ENCODE measurements at regions of chr17 and their contacts with region 1.

Region 1: GRCh38 chr17:68457539-68458259 is 403 bp upstream of the WIPI1 start:
- DNase-seq: peak; percentile 98 to 100 (median 99)
- H3K4me3 ChIP-seq: peak overlapping the region; percentile 59 to 96 (median 85)
- H3K27ac ChIP-seq: peak overlapping the region in 54 of 59 donors; percentile 18 to 97 (median 79)
- H3K27me3 ChIP-seq: no peaks in the 10 kb centered on the region
- CTCF ChIP-seq: peak in 22 of 56 donors; percentile 5 to 49 (median 22)

Region 2: GRCh38 chr17:68172461-68172954 is 285.2 kb before region 1 on chr17:
- intact Hi-C with region 1: loop called in 1 of 2 experiments (anchors 2 kb)
- DNase-seq: peak in 9 of 10 donors; percentile 53 to 77 (median 70)
- H3K4me3 ChIP-seq: no peak overlapping the region
- H3K27ac ChIP-seq: no peak overlapping the region
- H3K27me3 ChIP-seq: no peaks in the 10 kb centered on the region
- CTCF ChIP-seq: peak; percentile 79 to 99 (median 94)

Region 3: DNA sequence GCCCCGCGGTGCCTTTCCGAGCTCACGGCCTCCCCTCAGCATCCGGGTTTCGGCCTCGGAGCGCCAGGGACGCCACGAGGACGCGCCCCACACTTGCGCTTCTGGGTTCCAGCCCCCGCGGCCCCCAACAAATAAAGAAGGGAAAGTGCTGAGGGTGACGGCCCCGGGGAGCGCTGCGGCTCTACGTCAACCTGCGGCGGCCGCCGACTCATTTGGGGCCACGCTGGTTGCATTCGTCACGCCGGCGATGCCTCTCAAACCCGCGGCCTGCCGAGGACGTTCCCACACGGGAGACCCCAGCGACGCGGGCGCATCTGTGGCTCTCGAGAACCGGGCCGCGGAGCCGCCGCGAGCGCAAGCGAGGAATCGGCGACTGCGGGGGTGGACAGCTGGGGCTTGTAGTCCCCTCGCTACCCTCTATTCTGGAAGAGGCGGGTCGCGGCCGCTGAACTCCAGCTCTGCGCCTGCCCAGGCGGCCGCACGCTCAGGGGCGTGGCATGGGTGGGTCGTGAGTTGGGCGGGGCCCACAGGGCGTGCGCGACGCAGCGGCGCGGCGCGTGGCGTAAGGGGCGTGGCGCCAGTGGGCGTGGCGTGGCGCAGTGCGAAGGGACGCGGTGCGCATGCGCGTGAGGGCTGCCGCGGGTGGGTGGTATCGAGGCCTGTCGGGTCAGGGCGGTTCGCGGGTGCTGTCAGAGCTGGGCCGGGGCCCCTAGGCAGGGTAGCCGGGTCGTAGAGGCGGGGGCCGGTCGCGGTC is 210.1 kb before region 1 on chr17 and contains the start of gene AMZ2:
- intact Hi-C with region 1: loop called (anchors 1 to 5 kb)
- DNase-seq: peak; percentile 87 to 98 (median 94)
- H3K4me3 ChIP-seq: peak within 1 kb of the TSS; percentile 60 to 97 (median 88)
- H3K27ac ChIP-seq: peak within 1 kb of the TSS; percentile 85 to 100 (median 97)
- H3K27me3 ChIP-seq: no peaks in the 10 kb centered on the region
- CTCF ChIP-seq: peak in 33 of 56 donors; percentile 12 to 66 (median 29)
- total RNA-seq, gene AMZ2: 77.7 to 163 (median 118) TPM

Region 4: DNA sequence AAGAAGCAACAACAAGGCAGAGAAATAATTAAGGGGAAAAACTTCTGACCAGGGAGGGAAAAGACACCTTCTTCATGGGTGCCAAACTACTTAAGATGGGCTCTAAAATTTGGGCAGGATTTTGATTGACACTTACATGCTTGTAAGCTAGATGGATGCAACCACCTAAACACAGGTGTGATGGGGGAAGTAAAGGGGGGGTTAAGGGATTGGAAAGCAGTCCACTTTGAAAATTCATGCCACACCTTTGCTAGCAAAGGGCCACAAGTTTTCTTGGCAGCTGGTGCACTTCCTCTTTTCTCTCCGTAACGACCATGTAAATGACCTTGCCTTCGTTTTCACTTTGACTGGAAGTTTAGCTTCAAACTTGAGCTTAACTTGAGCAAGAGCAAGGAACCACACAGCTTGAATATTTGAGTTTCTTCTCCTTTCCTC is 40.2 kb after region 1 on chr17:
- intact Hi-C with region 1: no loop called
- DNase-seq: no peak
- H3K4me3 ChIP-seq: no peak overlapping the region
- H3K27ac ChIP-seq: peak overlapping the region in 10 of 59 donors; percentile 12 to 56 (median 26)
- H3K27me3 ChIP-seq: no peaks in the 10 kb centered on the region
- CTCF ChIP-seq: no peak

Region 5: DNA sequence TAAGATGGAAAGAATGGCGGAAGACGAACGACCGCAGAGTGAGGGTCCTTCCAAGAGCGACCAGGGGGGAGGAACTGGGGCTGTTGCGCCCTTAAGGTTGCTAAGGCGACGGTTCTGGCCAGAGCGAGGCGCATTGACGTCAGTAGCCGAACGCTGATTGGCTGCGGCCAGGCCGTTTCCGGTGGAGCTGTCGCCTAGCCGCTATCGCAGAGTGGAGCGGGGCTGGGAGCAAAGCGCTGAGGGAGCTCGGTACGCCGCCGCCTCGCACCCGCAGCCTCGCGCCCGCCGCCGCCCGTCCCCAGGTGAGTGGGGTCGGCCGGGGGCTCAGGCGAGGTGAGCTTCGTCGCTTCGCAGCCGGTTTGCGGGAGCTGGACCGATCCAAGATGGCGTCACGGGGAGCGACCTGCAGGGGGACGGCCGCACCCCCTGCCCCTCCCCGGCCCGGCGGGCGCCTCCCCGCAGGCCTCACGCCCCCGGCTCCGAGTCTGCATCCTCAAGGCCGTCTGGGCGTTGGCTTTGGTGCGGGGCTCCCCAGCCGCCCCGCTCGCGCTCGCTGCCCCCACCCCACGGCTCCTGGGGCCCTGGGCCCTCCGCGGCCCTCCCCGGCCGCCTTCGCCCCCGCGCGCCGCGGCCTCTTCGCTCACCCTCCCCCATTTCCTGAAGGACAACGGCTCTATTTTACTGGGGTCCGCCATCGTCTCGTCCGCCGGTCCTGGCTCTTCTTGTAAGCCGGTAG is 54.7 kb after region 1 on chr17 and contains the start of gene PRKAR1A:
- intact Hi-C with region 1: loop called (anchors 1 to 2 kb)
- DNase-seq: peak; percentile 95 to 99 (median 98)
- H3K4me3 ChIP-seq: peak within 1 kb of the TSS; percentile 70 to 99 (median 89)
- H3K27ac ChIP-seq: peak within 1 kb of the TSS; percentile 87 to 100 (median 99)
- H3K27me3 ChIP-seq: no peaks in the 10 kb centered on the region
- CTCF ChIP-seq: peak in 29 of 56 donors; percentile 5 to 53 (median 31)
- total RNA-seq, gene PRKAR1A: 224 to 559 (median 417) TPM

Region 6: GRCh38 chr17:68566442-68566738 is 108.7 kb after region 1 on chr17:
- intact Hi-C with region 1: no loop called
- DNase-seq: no peak
- H3K4me3 ChIP-seq: no peak overlapping the region
- H3K27ac ChIP-seq: peak overlapping the region in 4 of 59 donors; percentile 12 to 36 (median 19)
- H3K27me3 ChIP-seq: no peaks in the 10 kb centered on the region
- CTCF ChIP-seq: no peak

Region 7: GRCh38 chr17:68613739-68614298 is 156.1 kb after region 1 on chr17:
- intact Hi-C with region 1: no loop called
- DNase-seq: no peak
- H3K4me3 ChIP-seq: no peak overlapping the region
- H3K27ac ChIP-seq: no peak overlapping the region
- H3K27me3 ChIP-seq: peaks cover 0 to 3% (median 0%) of the 10 kb centered on the region in 45 donors
- CTCF ChIP-seq: peak; percentile 25 to 69 (median 50)

Measured in dorsolateral prefrontal cortex (tissue), 120 donors.